CD8-positive, alpha-beta T cell (primary cell): ENCODE measurements at regions of chr7 and their contacts with region 1.

Region 1: GRCh38 chr7:157113607-157114006 is 25.1 kb upstream of the UBE3C start:
- DNase-seq: peak in 1 of 9 experiments; percentile 30
- ATAC-seq: no peak
- H3K4me3 ChIP-seq: no peak overlapping the region
- H3K4me3 Mint-ChIP-seq: no peak overlapping the region
- H3K27ac ChIP-seq: no peak overlapping the region
- H3K27ac Mint-ChIP-seq: no peak overlapping the region
- H3K4me1 ChIP-seq: no peaks in the 10 kb centered on the region
- H3K4me1 Mint-ChIP-seq: no peaks in the 10 kb centered on the region
- H3K27me3 ChIP-seq: peaks cover 0 to 3% of the 10 kb centered on the region in 2 experiments
- H3K27me3 Mint-ChIP-seq: peaks cover 30% of the 10 kb centered on the region
- CTCF ChIP-seq: no peak

Region 2: DNA sequence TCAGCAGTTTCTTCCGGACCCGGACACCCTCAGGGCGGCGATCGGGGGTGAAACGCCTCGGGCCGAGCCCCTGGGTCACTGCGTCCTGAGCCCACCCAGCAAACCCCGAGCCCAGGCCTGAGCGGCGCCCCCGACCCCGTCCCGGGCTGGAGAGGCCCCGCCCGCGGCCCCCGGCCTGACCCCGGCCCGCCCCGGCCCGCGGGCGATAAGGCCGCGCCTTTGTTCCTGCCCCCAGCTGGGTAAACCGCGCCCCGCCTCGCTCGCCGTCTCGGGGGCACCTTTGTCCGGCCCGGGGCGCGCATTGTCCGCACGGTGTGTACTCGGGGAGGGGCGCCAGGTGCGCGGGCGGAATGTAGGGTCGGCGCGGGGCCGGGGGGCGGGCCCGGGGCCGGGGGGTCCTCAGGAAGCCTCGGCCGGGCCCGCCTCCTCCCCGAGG is 114.0 kb before region 1 on chr7:
- CTCF ChIA-PET with region 1: no interaction called
- POLR2A ChIA-PET with region 1: no interaction called
- intact Hi-C with region 1: loop called in 1 of 2 experiments (anchors 5 kb)
- DNase-seq: peak in 1 of 9 experiments; percentile 3
- ATAC-seq: no peak
- H3K4me3 ChIP-seq: peak overlapping the region; percentile 17 to 27
- H3K4me3 Mint-ChIP-seq: peak overlapping the region; percentile 71
- H3K27ac ChIP-seq: no peak overlapping the region
- H3K27ac Mint-ChIP-seq: no peak overlapping the region
- H3K4me1 ChIP-seq: peaks cover 20% of the 10 kb centered on the region
- H3K4me1 Mint-ChIP-seq: peaks cover 27% of the 10 kb centered on the region
- H3K27me3 ChIP-seq: peaks cover 32 to 39% of the 10 kb centered on the region in 2 experiments
- H3K27me3 Mint-ChIP-seq: peaks cover 74% of the 10 kb centered on the region
- CTCF ChIP-seq: no peak